ENCODE measurements at regions of chr4 and their contacts with region 1.

Region 1: GRCh38 chr4:100391863-100392262 is 126.0 kb downstream of the EMCN start:
- DNase-seq: no peak
- ATAC-seq: no peak
- H3K4me3 ChIP-seq: no peak overlapping the region
- H3K27ac ChIP-seq: no peak overlapping the region
- H3K4me1 ChIP-seq: no peaks in the 10 kb centered on the region
- H3K27me3 ChIP-seq: no peaks in the 10 kb centered on the region
- CTCF ChIP-seq: no peak
- EP300 ChIP-seq: no peak
- POLR2A ChIP-seq: no peak
- RAD21 ChIP-seq: no peak

Region 2: GRCh38 chr4:100022792-100023222 is 369.1 kb before region 1 on chr4:
- CTCF ChIA-PET with region 1: no interaction called
- POLR2A ChIA-PET with region 1: no interaction called
- RAD21 ChIA-PET with region 1: no interaction called
- SMC1A ChIA-PET with region 1: no interaction called
- in situ Hi-C with region 1: no loop called
- intact Hi-C with region 1: loop called (anchors 10 kb)
- DNase-seq: no peak
- ATAC-seq: no peak; the same call in 2 of the 3 replicates
- H3K4me3 ChIP-seq: no peak overlapping the region
- H3K27ac ChIP-seq: no peak overlapping the region
- H3K4me1 ChIP-seq: no peaks in the 10 kb centered on the region
- H3K27me3 ChIP-seq: no peaks in the 10 kb centered on the region
- CTCF ChIP-seq: no peak
- EP300 ChIP-seq: no peak
- POLR2A ChIP-seq: no peak
- RAD21 ChIP-seq: no peak

Region 3: GRCh38 chr4:100286636-100287035 is 105.2 kb before region 1 on chr4:
- CTCF ChIA-PET with region 1: no interaction called
- POLR2A ChIA-PET with region 1: no interaction called
- RAD21 ChIA-PET with region 1: no interaction called
- SMC1A ChIA-PET with region 1: no interaction called
- in situ Hi-C with region 1: no loop called
- intact Hi-C with region 1: no loop called
- DNase-seq: no peak
- ATAC-seq: no peak
- H3K4me3 ChIP-seq: no peak overlapping the region
- H3K27ac ChIP-seq: no peak overlapping the region
- H3K4me1 ChIP-seq: no peaks in the 10 kb centered on the region
- H3K27me3 ChIP-seq: no peaks in the 10 kb centered on the region
- CTCF ChIP-seq: no peak
- EP300 ChIP-seq: no peak
- POLR2A ChIP-seq: no peak
- RAD21 ChIP-seq: no peak

Region 4: GRCh38 chr4:100504086-100504874 is 112.4 kb after region 1 on chr4:
- CTCF ChIA-PET with region 1: no interaction called
- POLR2A ChIA-PET with region 1: no interaction called
- RAD21 ChIA-PET with region 1: no interaction called
- SMC1A ChIA-PET with region 1: no interaction called
- in situ Hi-C with region 1: no loop called
- intact Hi-C with region 1: no loop called
- DNase-seq: no peak
- ATAC-seq: no peak
- H3K4me3 ChIP-seq: no peak overlapping the region
- H3K27ac ChIP-seq: no peak overlapping the region
- H3K4me1 ChIP-seq: no peaks in the 10 kb centered on the region
- H3K27me3 ChIP-seq: no peaks in the 10 kb centered on the region
- CTCF ChIP-seq: no peak
- EP300 ChIP-seq: no peak
- POLR2A ChIP-seq: no peak
- RAD21 ChIP-seq: no peak

Measured in GM12878 (cell line).